ENCODE measurements at regions of chr11 and their contacts with region 1.

Region 1: GRCh38 chr11:123580557-123581275 is 73.7 kb downstream of the SCN3B start:
- DNase-seq: peak; percentile 68
- H3K4me3 Mint-ChIP-seq: no peak overlapping the region
- H3K27ac Mint-ChIP-seq: no peak overlapping the region
- H3K4me1 Mint-ChIP-seq: peaks cover 9% of the 10 kb centered on the region
- H3K27me3 Mint-ChIP-seq: peaks cover 49% of the 10 kb centered on the region
- CTCF ChIP-seq: peak; percentile 95

Region 2: DNA sequence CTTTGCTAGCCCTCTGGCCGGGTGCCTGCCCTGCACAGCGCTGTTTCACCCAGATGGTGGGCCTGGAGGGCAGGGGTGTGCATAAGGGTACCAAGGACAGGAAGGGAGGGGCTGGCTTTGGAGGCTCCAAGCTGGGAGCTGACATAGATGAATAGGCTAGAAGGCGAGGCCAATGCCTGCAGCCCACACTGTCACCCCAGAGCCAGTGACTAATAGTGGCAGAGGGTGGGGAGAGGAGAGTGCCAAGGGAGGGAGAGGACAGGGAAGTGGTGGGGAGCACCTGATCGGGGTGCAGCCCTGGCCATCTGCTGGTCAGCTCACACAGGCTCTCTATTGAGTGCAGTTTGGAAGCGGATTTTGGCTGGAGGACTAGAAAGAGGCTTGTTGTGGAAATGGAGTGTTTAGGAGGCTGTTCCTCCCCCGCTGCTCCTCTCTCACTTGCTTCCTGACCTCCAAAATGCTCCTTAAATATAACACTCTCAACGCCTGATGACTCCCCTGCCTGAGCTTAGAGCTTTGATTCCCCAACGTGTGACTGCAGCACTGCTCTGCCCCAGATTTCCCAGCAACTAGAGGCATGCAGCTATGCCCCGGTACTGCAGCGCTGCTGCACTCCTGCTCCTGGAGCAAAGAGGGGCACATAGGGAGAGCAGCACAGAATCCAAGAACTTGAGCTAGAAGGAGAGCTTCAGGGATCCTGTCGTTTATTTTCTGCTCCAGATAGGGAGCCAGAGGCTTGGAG is 61.5 kb before region 1 on chr11:
- CTCF ChIA-PET with region 1: interaction called, 12 read pairs
- POLR2A ChIA-PET with region 1: no interaction called
- intact Hi-C with region 1: no loop called
- DNase-seq: no peak
- H3K4me3 Mint-ChIP-seq: no peak overlapping the region
- H3K27ac Mint-ChIP-seq: no peak overlapping the region
- H3K4me1 Mint-ChIP-seq: no peaks in the 10 kb centered on the region
- H3K27me3 Mint-ChIP-seq: peaks cover 42% of the 10 kb centered on the region
- CTCF ChIP-seq: no peak

Region 3: GRCh38 chr11:123543797-123544196 is 36.9 kb before region 1 on chr11:
- CTCF ChIA-PET with region 1: interaction called, 12 read pairs
- POLR2A ChIA-PET with region 1: interaction called, 3 read pairs
- intact Hi-C with region 1: no loop called
- DNase-seq: peak; percentile 59
- H3K4me3 Mint-ChIP-seq: no peak overlapping the region
- H3K27ac Mint-ChIP-seq: no peak overlapping the region
- H3K4me1 Mint-ChIP-seq: peaks cover 11% of the 10 kb centered on the region
- H3K27me3 Mint-ChIP-seq: peaks cover 11% of the 10 kb centered on the region
- CTCF ChIP-seq: no peak

Region 4: GRCh38 chr11:123616505-123617198 is 35.9 kb after region 1 on chr11:
- CTCF ChIA-PET with region 1: interaction called, 14 read pairs
- POLR2A ChIA-PET with region 1: no interaction called
- intact Hi-C with region 1: no loop called
- DNase-seq: peak; percentile 77
- H3K4me3 Mint-ChIP-seq: no peak overlapping the region
- H3K27ac Mint-ChIP-seq: peak overlapping the region; percentile 76
- H3K4me1 Mint-ChIP-seq: peaks cover 9% of the 10 kb centered on the region
- H3K27me3 Mint-ChIP-seq: peaks cover 27% of the 10 kb centered on the region
- CTCF ChIP-seq: no peak

Region 5: DNA sequence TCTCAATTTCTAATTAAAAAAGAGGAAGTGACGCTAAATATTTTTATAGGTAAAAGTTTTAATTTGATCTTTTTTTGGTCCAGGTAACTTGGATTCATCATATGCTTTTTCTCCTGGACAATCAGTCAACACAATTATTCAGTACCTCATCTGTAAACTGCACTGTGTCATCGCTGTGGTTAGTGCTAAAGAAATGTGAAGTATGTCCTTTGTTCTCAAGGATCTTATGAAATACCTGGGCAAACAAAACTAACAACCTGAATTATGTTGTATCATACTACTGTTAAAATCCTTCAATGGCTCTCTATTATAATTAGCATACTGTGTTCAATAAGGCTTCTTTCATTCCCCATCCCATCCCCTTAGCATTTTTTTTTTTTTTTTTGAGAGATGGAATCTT is 93.6 kb after region 1 on chr11:
- CTCF ChIA-PET with region 1: interaction called, 12 read pairs
- POLR2A ChIA-PET with region 1: interaction called, 4 read pairs
- intact Hi-C with region 1: no loop called
- DNase-seq: no peak
- H3K4me3 Mint-ChIP-seq: no peak overlapping the region
- H3K27ac Mint-ChIP-seq: no peak overlapping the region
- H3K4me1 Mint-ChIP-seq: peaks cover 11% of the 10 kb centered on the region
- H3K27me3 Mint-ChIP-seq: no peaks in the 10 kb centered on the region
- CTCF ChIP-seq: no peak

Region 6: GRCh38 chr11:123707606-123708205 is 127.0 kb after region 1 on chr11:
- CTCF ChIA-PET with region 1: interaction called, 354 read pairs
- POLR2A ChIA-PET with region 1: interaction called, 5 read pairs
- intact Hi-C with region 1: loop called (anchors 1 kb)
- DNase-seq: peak; percentile 78
- H3K4me3 Mint-ChIP-seq: no peak overlapping the region
- H3K27ac Mint-ChIP-seq: no peak overlapping the region
- H3K4me1 Mint-ChIP-seq: no peaks in the 10 kb centered on the region
- H3K27me3 Mint-ChIP-seq: peaks cover 15% of the 10 kb centered on the region
- CTCF ChIP-seq: peak; percentile 84